ENCODE measurements at regions of chr4 and their contacts with region 1.

Region 1: GRCh38 chr4:9762823-9763475 is 18.5 kb upstream of the DRD5 start:
- DNase-seq: no peak

Region 2: DNA sequence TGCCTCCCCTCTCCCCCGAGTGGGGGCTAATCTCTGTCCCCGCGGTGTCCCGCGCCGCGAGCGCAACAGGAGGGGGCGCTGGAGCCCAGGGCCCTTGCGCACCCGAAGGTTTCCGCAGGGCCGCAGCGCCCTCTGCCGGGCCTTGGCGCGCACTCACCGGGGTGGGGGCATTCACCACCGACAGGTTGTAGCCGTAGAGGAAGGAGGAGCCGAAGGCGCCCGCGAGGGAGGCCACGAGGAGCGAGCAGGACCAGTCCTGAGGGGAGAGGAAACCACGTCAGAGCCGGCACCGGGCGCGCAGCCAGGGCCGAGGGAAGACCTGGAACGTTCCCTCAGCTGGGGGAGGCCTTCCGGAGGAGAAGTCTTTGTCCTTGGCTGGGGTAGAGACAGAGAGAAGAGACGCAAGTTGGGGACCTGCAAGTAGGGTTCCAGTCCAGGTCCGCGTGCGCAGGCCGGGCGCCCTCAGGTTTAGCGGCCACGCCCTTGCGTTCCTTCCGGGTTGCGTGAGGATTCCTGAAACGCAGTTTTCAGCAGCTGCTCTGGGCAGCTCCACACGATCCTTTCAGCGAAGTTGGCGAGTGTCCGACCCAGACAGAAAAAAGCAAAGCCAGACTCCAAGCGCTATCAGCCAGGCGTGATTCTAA is 256.0 kb after region 1 on chr4:
- intact Hi-C with region 1: loop called (anchors 2 to 10 kb)
- DNase-seq: peak; percentile 99

Region 3: GRCh38 chr4:10063544-10064300 is 300.8 kb after region 1 on chr4:
- intact Hi-C with region 1: loop called (anchors 10 kb)
- DNase-seq: peak; percentile 92

Region 4: GRCh38 chr4:10416441-10416840 is 653.5 kb after region 1 on chr4:
- intact Hi-C with region 1: loop called in 1 of 2 experiments (anchors 2 kb)
- DNase-seq: no peak

Measured in posterior vena cava (tissue), 2 donors.